Naive thymus-derived CD4-positive, alpha-beta T cell (primary cell): ENCODE measurements at regions of chr2 and their contacts with region 1.

Region 1: DNA sequence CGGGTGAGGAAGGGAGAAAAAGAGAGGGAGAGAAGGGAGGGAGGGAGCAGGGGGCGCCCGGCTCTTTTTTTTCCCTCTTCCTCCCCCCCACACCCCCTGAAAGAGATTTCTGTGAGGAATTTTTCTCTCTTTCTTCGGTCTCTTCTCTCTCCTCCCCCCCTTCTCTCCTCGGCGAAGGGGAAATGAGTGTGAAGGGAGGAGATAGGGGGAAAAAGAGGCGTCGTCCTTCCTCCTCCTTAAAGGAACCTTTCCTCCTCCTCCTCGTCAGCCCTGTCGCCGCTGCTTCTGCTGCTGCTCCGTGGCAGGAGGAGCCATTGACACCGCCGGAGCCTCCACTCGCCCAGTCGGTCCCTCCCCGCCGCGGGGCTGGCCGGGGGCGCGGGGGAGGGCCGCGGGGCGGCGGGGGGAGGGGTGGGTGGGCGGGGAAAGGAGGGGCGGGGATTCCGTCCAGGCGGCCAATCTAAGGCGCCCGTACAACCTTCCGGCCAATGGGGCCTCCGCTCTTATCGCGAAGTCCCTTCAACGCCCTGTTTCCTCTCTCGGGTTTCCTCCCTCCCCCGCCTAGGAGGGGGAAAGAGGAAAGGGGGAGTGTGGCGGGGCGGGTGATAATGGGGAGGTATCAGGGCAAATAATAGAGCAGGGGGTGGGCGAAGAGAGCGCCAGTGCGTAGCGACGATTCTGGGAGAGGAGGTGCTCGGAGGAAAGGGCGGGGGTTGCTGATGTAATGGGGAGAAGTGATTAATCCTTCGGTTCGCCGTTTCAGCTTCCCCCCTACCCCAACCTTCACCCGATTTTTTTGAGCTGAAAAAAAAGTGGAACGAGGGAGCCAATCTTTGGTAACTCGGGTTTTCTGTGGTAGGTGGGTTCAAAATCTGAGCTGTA is at the start of gene FBXO11:
- DNase-seq: peak; percentile 80 to 99 (median 96)
- ATAC-seq: peak; percentile 90
- H3K4me3 ChIP-seq: peak within 1 kb of the TSS; percentile 77
- H3K4me3 Mint-ChIP-seq: peak within 1 kb of the TSS; percentile 78 to 97 (median 94)
- H3K27ac ChIP-seq: peak within 1 kb of the TSS; percentile 99
- H3K27ac Mint-ChIP-seq: peak within 1 kb of the TSS; percentile 68 to 97 (median 93)
- H3K4me1 ChIP-seq: peaks cover 14 to 20% of the 10 kb centered on the region in 2 donors
- H3K4me1 Mint-ChIP-seq: peaks cover 24 to 55% (median 51%) of the 10 kb centered on the region in 7 donors
- H3K27me3 ChIP-seq: no peaks in the 10 kb centered on the region
- H3K27me3 Mint-ChIP-seq: no peaks in the 10 kb centered on the region
- total RNA-seq, gene FBXO11: 54.6 to 92.1 (median 85.5) TPM

Region 2: DNA sequence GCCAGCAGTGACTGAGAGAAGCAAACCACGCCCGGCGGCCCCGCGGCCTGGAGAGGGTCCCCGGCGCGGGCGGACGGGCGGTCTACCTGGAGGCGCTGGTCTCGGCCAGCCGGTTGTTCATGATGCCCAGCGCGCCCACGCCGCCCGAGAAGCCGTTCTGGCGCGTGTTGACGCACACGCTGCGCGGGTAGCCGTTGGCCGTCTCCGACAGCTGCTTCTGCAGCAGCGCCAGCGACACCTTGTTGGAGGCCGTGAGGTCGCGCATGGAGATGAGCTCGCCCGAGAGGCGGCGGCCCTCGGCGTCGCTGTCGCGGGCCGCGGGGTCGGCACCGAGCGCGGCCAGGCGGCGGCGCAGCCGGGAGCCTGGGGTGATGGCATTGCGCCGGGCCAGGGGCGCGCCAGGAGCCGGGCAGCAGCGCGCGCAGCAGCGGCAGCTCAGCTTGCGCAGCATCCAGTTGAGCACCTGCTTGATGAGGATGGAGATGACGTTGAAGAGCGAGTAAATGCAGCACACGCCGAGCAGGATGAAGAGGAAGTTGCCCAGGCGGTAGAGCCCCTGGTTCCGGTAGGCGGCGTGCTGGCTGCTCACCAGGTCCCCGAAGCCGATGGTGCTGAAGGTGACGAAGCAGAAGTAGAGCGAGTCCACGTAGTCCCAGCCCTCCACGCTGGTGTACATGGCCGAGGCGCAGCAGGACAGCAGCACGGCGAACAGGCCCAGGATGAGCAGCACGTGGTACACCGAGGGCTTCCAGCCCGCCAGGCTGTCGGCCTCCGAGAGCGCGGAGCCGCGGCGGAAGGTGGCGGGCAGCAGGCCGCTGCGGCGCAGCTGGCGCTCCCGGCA is 385.4 kb before region 1 on chr2:
- CTCF ChIA-PET with region 1: no interaction called
- POLR2A ChIA-PET with region 1: no interaction called
- intact Hi-C with region 1: loop called (anchors 2 to 5 kb)
- DNase-seq: peak; percentile 43 to 79 (median 63)
- ATAC-seq: peak; percentile 91
- H3K4me3 ChIP-seq: peak overlapping the region; percentile 74
- H3K4me3 Mint-ChIP-seq: peak overlapping the region; percentile 90 to 99 (median 95)
- H3K27ac ChIP-seq: peak overlapping the region; percentile 15
- H3K27ac Mint-ChIP-seq: peak overlapping the region; percentile 82 to 96 (median 90)
- H3K4me1 ChIP-seq: peaks cover 0 to 4% of the 10 kb centered on the region in 2 donors
- H3K4me1 Mint-ChIP-seq: peaks cover 5 to 21% (median 20%) of the 10 kb centered on the region in 7 donors
- H3K27me3 ChIP-seq: no peaks in the 10 kb centered on the region
- H3K27me3 Mint-ChIP-seq: peaks cover 0 to 4% (median 0%) of the 10 kb centered on the region in 5 donors

Region 3: GRCh38 chr2:47888581-47889280 is 17.7 kb before region 1 on chr2:
- CTCF ChIA-PET with region 1: interaction called, 3 read pairs
- POLR2A ChIA-PET with region 1: interaction called, 5 read pairs
- intact Hi-C with region 1: loop called (anchors 1 kb)
- DNase-seq: peak in 7 of 9 donors; percentile 40 to 74 (median 65)
- ATAC-seq: peak; percentile 97
- H3K4me3 ChIP-seq: no peak overlapping the region
- H3K4me3 Mint-ChIP-seq: peak overlapping the region in 9 of 10 donors; percentile 20 to 78 (median 59)
- H3K27ac ChIP-seq: peak overlapping the region; percentile 42
- H3K27ac Mint-ChIP-seq: peak overlapping the region; percentile 5 to 88 (median 73)
- H3K4me1 ChIP-seq: peaks cover 15 to 29% of the 10 kb centered on the region in 2 donors
- H3K4me1 Mint-ChIP-seq: peaks cover 40 to 89% (median 72%) of the 10 kb centered on the region in 7 donors
- H3K27me3 ChIP-seq: no peaks in the 10 kb centered on the region
- H3K27me3 Mint-ChIP-seq: no peaks in the 10 kb centered on the region

Region 4: DNA sequence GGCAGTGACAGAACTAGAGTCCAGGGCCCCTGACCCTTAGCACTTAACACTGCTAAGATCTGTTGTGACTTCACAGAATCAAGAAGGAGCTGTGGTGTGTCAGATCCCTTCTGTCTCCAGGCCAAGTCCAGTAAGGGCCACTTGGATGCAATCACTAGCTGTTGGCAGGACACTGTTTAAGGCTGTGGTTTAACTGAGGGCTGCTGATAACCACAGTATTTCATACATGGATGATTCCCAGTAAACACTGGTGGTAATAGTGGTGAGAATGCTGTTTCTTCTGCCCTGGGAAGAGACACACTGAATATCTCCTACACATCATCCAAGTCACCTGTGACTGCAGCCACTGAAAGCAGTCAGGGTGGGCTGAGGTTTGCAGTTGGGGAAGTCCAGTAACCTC is 77.6 kb after region 1 on chr2:
- CTCF ChIA-PET with region 1: no interaction called
- POLR2A ChIA-PET with region 1: no interaction called
- intact Hi-C with region 1: no loop called
- DNase-seq: no peak
- ATAC-seq: no peak
- H3K4me3 ChIP-seq: no peak overlapping the region
- H3K4me3 Mint-ChIP-seq: no peak overlapping the region
- H3K27ac ChIP-seq: no peak overlapping the region
- H3K27ac Mint-ChIP-seq: no peak overlapping the region
- H3K4me1 ChIP-seq: no peaks in the 10 kb centered on the region
- H3K4me1 Mint-ChIP-seq: no peaks in the 10 kb centered on the region
- H3K27me3 ChIP-seq: no peaks in the 10 kb centered on the region
- H3K27me3 Mint-ChIP-seq: peaks cover 0 to 8% (median 0%) of the 10 kb centered on the region in 5 donors

Region 5: GRCh38 chr2:48016225-48017019 is 110.0 kb after region 1 on chr2:
- CTCF ChIA-PET with region 1: interaction called, 3 read pairs
- POLR2A ChIA-PET with region 1: no interaction called
- intact Hi-C with region 1: loop called in 1 of 2 experiments (anchors 1 kb)
- DNase-seq: peak in 4 of 9 donors; percentile 1 to 19 (median 1)
- ATAC-seq: no peak
- H3K4me3 ChIP-seq: no peak overlapping the region
- H3K4me3 Mint-ChIP-seq: no peak overlapping the region
- H3K27ac ChIP-seq: no peak overlapping the region
- H3K27ac Mint-ChIP-seq: no peak overlapping the region
- H3K4me1 ChIP-seq: no peaks in the 10 kb centered on the region
- H3K4me1 Mint-ChIP-seq: no peaks in the 10 kb centered on the region
- H3K27me3 ChIP-seq: no peaks in the 10 kb centered on the region
- H3K27me3 Mint-ChIP-seq: peaks cover 5 to 17% (median 7%) of the 10 kb centered on the region in 5 donors

Region 6: GRCh38 chr2:48356701-48357325 is 450.4 kb after region 1 on chr2:
- CTCF ChIA-PET with region 1: no interaction called
- POLR2A ChIA-PET with region 1: no interaction called
- intact Hi-C with region 1: loop called in 1 of 2 experiments (anchors 2 kb)
- DNase-seq: peak in 7 of 9 donors; percentile 53 to 77 (median 72)
- ATAC-seq: peak; percentile 88
- H3K4me3 ChIP-seq: peak overlapping the region; percentile 0
- H3K4me3 Mint-ChIP-seq: peak overlapping the region; percentile 5 to 84 (median 72)
- H3K27ac ChIP-seq: peak overlapping the region; percentile 72
- H3K27ac Mint-ChIP-seq: peak overlapping the region; percentile 84 to 97 (median 95)
- H3K4me1 ChIP-seq: peaks cover 15 to 50% of the 10 kb centered on the region in 2 donors
- H3K4me1 Mint-ChIP-seq: peaks cover 46 to 77% (median 67%) of the 10 kb centered on the region in 7 donors
- H3K27me3 ChIP-seq: no peaks in the 10 kb centered on the region
- H3K27me3 Mint-ChIP-seq: no peaks in the 10 kb centered on the region